ENCODE measurements at regions of chr3 and their contacts with region 1.

Region 1: DNA sequence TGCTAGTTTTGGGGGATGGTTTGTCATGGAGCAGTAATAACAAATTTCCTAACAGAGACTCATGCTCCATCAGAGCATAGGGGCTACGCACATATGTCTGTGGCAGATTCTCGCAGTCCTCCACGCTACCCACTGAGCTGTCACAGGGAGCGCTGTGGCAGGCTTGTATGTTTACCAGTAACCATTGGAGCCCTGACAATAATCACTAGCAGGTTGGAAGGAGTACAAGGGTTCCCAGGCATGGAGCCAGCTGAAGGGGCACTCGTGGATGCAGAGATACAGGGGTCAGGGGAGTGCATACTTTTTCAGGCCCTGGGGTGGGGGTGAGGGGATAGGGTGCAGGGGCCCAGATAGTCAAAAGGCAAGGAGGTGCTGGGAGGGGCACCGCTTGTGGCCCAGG is 7.9 kb upstream of the GP9 start:
- DNase-seq: no peak
- H3K4me3 ChIP-seq: no peak overlapping the region
- H3K27ac ChIP-seq: no peak overlapping the region
- H3K4me1 ChIP-seq: peaks cover 9% of the 10 kb centered on the region
- CTCF ChIP-seq: no peak

Region 2: GRCh38 chr3:128112357-128112968 is 940.2 kb before region 1 on chr3:
- CTCF ChIA-PET with region 1: no interaction called
- POLR2A ChIA-PET with region 1: no interaction called
- intact Hi-C with region 1: no loop called
- DNase-seq: peak; percentile 30
- H3K4me3 ChIP-seq: no peak overlapping the region
- H3K27ac ChIP-seq: no peak overlapping the region
- H3K4me1 ChIP-seq: peaks cover 33% of the 10 kb centered on the region
- CTCF ChIP-seq: no peak

Region 3: DNA sequence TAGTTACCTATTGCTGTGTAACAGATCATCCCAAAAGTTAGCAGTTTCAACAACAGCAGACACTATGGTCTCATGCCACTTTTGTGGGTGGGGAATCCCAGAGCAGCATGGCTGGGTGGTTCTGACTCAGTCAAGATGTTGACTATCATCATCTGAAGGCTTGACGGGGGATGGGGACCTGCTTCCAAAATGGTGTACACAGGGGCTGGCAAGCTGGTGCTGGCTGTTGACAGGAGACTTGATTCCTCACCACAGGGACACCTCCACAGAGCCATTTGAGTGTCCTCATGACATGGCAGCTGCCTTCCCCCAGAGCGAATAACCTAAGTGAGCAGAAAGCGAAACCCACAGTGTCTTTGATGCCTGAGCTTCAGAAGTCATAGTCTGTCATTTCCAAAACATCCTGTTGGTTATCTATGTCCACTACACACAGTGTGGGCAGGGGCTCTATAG is 605.1 kb before region 1 on chr3:
- CTCF ChIA-PET with region 1: no interaction called
- POLR2A ChIA-PET with region 1: no interaction called
- intact Hi-C with region 1: no loop called
- DNase-seq: no peak
- H3K4me3 ChIP-seq: no peak overlapping the region
- H3K27ac ChIP-seq: no peak overlapping the region
- H3K4me1 ChIP-seq: peaks cover 9% of the 10 kb centered on the region
- CTCF ChIP-seq: no peak

Region 4: GRCh38 chr3:129063841-129064482 is 11.3 kb after region 1 on chr3:
- CTCF ChIA-PET with region 1: no interaction called
- POLR2A ChIA-PET with region 1: no interaction called
- intact Hi-C with region 1: no loop called
- DNase-seq: no peak
- H3K4me3 ChIP-seq: no peak overlapping the region
- H3K27ac ChIP-seq: no peak overlapping the region
- H3K4me1 ChIP-seq: peaks cover 6% of the 10 kb centered on the region
- CTCF ChIP-seq: no peak

Region 5: DNA sequence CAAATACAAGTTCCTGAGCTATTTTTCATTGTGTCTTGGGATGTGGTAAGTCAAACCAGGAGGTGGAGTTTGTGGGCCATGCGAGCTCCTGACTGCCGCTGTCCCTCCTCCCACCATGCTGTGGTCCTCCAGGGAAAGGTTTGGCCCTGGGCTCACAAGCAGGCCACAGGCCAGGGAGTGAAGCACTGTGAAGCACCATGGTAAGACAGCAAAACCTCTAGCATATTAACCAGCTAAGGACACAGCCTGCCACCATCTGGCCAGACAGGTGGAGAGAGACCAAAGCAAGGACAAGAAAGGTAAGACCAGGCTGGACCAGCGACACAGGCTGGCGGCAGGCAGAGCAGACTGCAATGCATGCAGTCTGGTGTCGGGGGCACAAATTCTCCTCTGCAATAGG is 53.7 kb after region 1 on chr3:
- CTCF ChIA-PET with region 1: no interaction called
- POLR2A ChIA-PET with region 1: no interaction called
- intact Hi-C with region 1: loop called (anchors 1 kb)
- DNase-seq: no peak
- H3K4me3 ChIP-seq: no peak overlapping the region
- H3K27ac ChIP-seq: no peak overlapping the region
- H3K4me1 ChIP-seq: no peaks in the 10 kb centered on the region
- CTCF ChIP-seq: peak; percentile 31; the same call in 1 of the 2 replicates

Region 6: DNA sequence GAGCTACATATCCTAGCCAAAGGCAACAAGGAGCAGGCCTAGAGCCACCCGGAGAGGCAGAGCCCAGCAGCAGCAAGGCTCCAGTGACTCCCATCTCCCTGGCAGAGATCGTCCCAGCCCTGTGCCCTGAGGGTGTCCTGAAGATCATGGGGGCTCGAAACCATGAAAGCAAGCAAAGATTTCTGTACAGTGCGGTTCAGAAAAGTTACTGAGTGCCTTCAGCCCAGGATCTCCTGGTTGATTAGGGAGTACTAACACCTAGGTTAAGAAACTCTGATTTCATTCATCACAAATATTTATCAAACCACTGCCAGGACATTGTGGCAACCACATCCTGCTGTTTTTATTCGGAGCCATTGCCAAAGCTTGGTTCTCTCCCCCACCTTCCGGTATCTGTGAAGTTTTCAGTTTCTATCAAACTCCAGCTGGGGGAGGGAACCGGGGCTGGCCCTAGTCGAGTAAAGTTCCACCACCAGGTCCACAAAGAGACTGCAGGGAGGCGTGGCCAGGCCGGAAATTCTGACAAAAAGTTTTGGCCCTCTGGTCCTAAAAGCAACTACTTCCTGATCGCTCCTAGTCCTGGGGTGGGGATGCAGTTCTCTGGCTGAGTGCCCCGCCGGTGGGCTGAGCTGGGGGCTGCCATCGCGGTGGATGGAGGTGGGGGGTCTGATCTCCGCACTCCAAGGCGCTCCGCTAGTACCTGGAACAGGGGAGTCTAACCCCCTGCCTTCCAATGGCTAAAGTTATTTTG is 67.8 kb after region 1 on chr3:
- CTCF ChIA-PET with region 1: interaction called, 3 read pairs
- POLR2A ChIA-PET with region 1: interaction called, 8 read pairs
- intact Hi-C with region 1: loop called (anchors 2 kb)
- DNase-seq: peak; percentile 97
- H3K4me3 ChIP-seq: peak overlapping the region; percentile 74
- H3K27ac ChIP-seq: peak overlapping the region; percentile 92
- H3K4me1 ChIP-seq: peaks cover 65% of the 10 kb centered on the region
- CTCF ChIP-seq: no peak

Region 7: DNA sequence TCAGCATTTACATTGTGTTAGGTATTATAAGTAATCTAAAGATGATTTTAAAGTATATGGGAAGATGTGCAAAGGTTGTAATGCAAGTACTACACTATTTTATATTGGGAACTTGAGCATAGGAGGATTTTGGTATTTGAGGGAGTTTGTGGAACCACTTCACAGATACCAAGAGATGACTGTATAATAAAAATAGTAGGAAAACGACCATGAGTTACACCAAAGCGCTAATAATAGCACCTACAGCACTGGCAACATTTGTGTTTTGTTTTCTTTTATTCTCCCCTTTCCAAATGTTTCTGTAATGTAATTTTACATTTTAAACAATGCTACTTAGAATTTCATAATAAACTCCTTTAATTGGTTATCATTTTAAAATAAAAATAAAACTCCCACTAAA is 120.5 kb after region 1 on chr3:
- CTCF ChIA-PET with region 1: no interaction called
- POLR2A ChIA-PET with region 1: no interaction called
- intact Hi-C with region 1: no loop called
- DNase-seq: no peak
- H3K4me3 ChIP-seq: no peak overlapping the region
- H3K27ac ChIP-seq: no peak overlapping the region
- H3K4me1 ChIP-seq: peaks cover 17% of the 10 kb centered on the region
- CTCF ChIP-seq: no peak

Region 8: DNA sequence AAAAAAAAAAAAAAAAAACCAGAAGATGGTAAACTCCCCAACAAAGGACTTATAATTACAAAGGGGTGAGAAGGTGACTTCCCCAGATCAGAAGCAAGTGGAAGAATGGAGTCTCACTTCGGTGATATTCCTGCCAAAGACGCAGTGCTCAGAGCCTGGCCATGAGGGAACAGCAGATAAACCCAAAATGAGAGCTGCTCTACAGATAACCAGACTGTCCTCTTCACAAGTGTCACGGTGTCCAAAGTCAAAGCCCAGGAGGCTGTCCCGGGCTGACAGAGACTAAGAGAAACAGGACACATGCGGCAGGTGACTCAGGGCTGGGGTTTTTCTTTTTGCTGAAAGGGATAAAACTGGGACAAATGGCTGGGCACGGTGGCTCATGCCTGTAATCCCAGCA is 274.8 kb after region 1 on chr3:
- CTCF ChIA-PET with region 1: no interaction called
- POLR2A ChIA-PET with region 1: no interaction called
- intact Hi-C with region 1: loop called (anchors 5 kb)
- DNase-seq: no peak
- H3K4me3 ChIP-seq: no peak overlapping the region
- H3K27ac ChIP-seq: no peak overlapping the region
- H3K4me1 ChIP-seq: peaks cover 16% of the 10 kb centered on the region
- CTCF ChIP-seq: no peak